ENCODE measurements at regions of chr2 and their contacts with region 1.

Region 1: DNA sequence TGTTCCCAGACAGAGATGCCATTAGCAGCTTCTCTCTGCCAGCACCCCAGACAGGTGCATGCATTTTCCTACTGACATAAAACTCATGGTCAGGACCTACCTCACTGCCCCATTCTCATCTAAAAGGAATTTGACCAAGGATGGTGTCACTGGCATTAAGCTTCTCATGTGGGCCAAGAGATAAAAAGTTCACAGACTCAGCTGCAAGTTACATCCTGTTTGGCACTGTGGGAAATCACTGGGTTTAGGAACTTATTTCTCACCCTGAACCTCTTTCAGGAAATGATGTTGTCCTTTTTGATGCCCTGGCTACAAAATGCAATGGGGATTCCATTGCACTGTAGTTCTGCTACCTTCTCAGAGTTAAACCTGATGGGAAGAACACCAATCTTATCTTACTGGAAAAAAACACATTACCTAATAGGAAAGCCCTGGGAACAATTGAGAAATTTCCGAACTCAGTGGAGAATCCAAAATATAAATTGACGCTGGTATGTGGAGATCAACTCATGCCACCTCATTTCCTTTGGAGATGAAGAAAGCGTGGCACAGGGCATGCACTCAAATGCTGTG is 252.1 kb upstream of the COPS8 start:
- DNase-seq: peak; percentile 82
- H3K4me3 ChIP-seq: no peak overlapping the region
- H3K27ac ChIP-seq: no peak overlapping the region
- H3K4me1 ChIP-seq: peaks cover 11% of the 10 kb centered on the region
- H3K27me3 ChIP-seq: no peaks in the 10 kb centered on the region
- CTCF ChIP-seq: no peak

Region 2: GRCh38 chr2:236776695-236777251 is 56.8 kb before region 1 on chr2:
- CTCF ChIA-PET with region 1: no interaction called
- dilution Hi-C with region 1: loop called (anchors 5 kb)
- in situ Hi-C with region 1: no loop called
- intact Hi-C with region 1: no loop called
- DNase-seq: peak; percentile 31
- H3K4me3 ChIP-seq: no peak overlapping the region
- H3K27ac ChIP-seq: no peak overlapping the region
- H3K4me1 ChIP-seq: peaks cover 13% of the 10 kb centered on the region
- H3K27me3 ChIP-seq: no peaks in the 10 kb centered on the region
- CTCF ChIP-seq: no peak

Region 3: GRCh38 chr2:236852100-236852978 is 18.8 kb after region 1 on chr2:
- CTCF ChIA-PET with region 1: no interaction called
- dilution Hi-C with region 1: no loop called
- in situ Hi-C with region 1: no loop called
- intact Hi-C with region 1: no loop called
- DNase-seq: no peak
- H3K4me3 ChIP-seq: no peak overlapping the region
- H3K27ac ChIP-seq: no peak overlapping the region
- H3K4me1 ChIP-seq: no peaks in the 10 kb centered on the region
- H3K27me3 ChIP-seq: no peaks in the 10 kb centered on the region
- CTCF ChIP-seq: no peak

Region 4: DNA sequence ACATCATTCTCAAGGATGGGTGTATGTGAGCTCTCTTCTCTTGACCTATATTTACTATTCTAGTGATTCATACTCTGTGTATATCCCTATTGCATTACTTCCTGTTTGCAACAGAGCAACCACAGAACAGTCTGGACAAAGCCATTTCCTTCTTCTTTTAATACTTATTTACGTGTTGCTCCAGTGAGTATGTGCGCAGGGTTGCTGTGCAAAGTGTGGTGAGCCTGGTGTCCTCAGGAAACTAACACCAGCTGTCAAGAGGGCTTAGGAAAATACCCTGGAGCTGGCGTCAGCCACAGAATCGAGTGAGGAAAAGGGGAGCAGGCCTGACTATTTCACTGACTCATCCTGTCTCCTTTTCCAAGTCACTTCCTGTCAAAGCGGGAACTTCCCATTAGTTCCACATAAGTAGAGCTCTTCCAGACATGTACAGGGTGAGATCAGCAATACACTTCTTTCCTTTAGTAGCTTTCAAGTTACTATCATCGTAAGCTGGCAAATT is 38.0 kb after region 1 on chr2:
- CTCF ChIA-PET with region 1: no interaction called
- dilution Hi-C with region 1: loop called (anchors 5 kb)
- in situ Hi-C with region 1: no loop called
- intact Hi-C with region 1: no loop called
- DNase-seq: peak; percentile 92
- H3K4me3 ChIP-seq: no peak overlapping the region
- H3K27ac ChIP-seq: peak overlapping the region; percentile 79
- H3K4me1 ChIP-seq: peaks cover 47% of the 10 kb centered on the region
- H3K27me3 ChIP-seq: no peaks in the 10 kb centered on the region
- CTCF ChIP-seq: no peak